ENCODE measurements at regions of chr18 and their contacts with region 1.

Region 1: DNA sequence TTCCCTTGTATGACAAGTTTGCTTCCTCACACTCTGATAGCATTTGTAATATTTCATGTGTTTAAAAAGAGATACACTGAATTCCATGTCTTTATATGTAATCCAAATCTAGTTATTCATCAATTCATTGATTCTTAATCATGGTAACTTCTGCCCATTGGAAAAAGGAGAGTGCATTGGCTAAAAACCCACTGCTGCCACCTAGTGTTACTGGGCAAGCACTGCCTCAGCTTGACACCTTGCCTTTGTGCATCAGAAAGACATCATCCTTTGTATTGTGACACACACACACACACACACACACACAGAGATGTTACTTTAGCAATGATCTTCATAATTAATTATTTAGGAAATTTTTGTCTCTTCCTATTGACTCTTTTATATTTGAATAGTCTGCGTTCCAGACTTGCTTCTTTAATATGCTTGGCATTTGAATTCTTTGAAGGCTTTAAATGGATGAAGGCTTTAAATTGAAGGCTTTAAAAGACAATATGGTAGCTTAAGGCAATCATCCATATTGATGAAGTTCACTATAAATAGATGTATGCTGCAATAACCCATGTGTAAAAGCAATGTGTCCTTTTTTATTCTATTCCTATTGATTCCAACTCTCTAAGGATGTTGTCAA is 414.2 kb upstream of the CHST9 start:
- DNase-seq: peak in 1 of 2 donors; percentile 9
- ATAC-seq: peak in 1 of 8 donors; percentile 37
- H3K4me3 ChIP-seq: no peak overlapping the region
- H3K27ac ChIP-seq: no peak overlapping the region
- H3K4me1 ChIP-seq: peaks cover 0 to 9% (median 0%) of the 10 kb centered on the region in 9 donors
- H3K27me3 ChIP-seq: no peaks in the 10 kb centered on the region
- CTCF ChIP-seq: peak; percentile 40 to 86 (median 82)

Region 2: GRCh38 chr18:26813043-26813442 is 786.3 kb before region 1 on chr18:
- intact Hi-C with region 1: loop called in 1 of 10 experiments (anchors 10 kb)
- DNase-seq: peak in 1 of 2 donors; percentile 27
- ATAC-seq: peak in 3 of 8 donors; percentile 73 to 79 (median 78)
- H3K4me3 ChIP-seq: no peak overlapping the region
- H3K27ac ChIP-seq: no peak overlapping the region
- H3K4me1 ChIP-seq: no peaks in the 10 kb centered on the region
- H3K27me3 ChIP-seq: peaks cover 0 to 6% (median 0%) of the 10 kb centered on the region in 7 donors
- CTCF ChIP-seq: peak; percentile 21 to 76 (median 62)

Region 3: GRCh38 chr18:27005589-27005988 is 593.7 kb before region 1 on chr18:
- intact Hi-C with region 1: loop called in 1 of 10 experiments (anchors 5 kb)
- DNase-seq: no peak
- ATAC-seq: no peak
- H3K4me3 ChIP-seq: no peak overlapping the region
- H3K27ac ChIP-seq: no peak overlapping the region
- H3K4me1 ChIP-seq: no peaks in the 10 kb centered on the region
- H3K27me3 ChIP-seq: peaks cover 0 to 4% (median 0%) of the 10 kb centered on the region in 7 donors
- CTCF ChIP-seq: peak; percentile 2 to 38 (median 20)

Region 4: GRCh38 chr18:27017901-27018500 is 581.3 kb before region 1 on chr18:
- intact Hi-C with region 1: loop called in 3 of 10 experiments (anchors 5 kb)
- DNase-seq: no peak
- ATAC-seq: peak in 2 of 8 donors; percentile 33 to 66
- H3K4me3 ChIP-seq: no peak overlapping the region
- H3K27ac ChIP-seq: no peak overlapping the region
- H3K4me1 ChIP-seq: no peaks in the 10 kb centered on the region
- H3K27me3 ChIP-seq: no peaks in the 10 kb centered on the region
- CTCF ChIP-seq: peak; percentile 13 to 70 (median 58)

Region 5: DNA sequence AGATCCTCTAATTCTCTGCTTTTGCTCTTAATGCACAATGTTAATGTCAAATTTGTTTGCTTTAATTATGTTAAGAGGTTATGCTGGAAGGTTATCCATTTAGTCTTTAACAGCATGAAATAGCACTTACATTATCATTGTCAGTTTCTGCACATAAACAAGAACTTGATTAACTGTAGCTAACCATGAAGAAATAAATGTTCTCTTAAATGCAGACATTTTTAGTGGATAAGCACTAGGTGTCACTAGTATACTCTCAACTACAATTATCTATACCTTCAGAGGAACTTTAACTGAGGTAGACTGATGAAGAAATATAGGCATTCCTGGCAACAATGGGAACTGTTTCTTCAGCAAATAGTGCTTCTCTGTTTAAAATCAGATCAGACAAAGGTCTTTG is 235.4 kb before region 1 on chr18:
- intact Hi-C with region 1: loop called in 9 of 10 experiments (anchors 2 to 10 kb)
- DNase-seq: no peak
- ATAC-seq: no peak
- H3K4me3 ChIP-seq: no peak overlapping the region
- H3K27ac ChIP-seq: no peak overlapping the region
- H3K4me1 ChIP-seq: no peaks in the 10 kb centered on the region
- H3K27me3 ChIP-seq: no peaks in the 10 kb centered on the region
- CTCF ChIP-seq: peak in 8 of 9 donors; percentile 4 to 50 (median 38)

Region 6: DNA sequence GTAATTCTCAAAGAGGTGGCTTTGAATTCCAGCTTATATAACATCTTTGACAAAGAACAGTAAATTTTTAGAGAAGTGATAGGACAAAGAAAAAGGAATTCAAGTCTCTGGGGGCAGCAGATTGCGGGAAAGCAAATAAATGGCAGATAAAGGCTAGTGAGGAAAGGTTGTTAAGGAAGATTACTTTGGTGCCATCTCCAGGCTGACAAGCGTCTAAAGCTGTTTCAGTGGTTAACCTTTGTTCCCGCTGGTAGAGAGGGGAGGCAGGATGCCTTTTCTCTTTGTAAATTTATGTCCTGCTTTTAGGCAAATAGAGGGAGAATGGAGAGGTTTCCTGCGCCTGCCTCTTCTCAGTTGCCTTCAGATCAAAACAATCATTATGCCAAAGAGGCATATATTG is 17.0 kb after region 1 on chr18:
- intact Hi-C with region 1: no loop called
- DNase-seq: no peak
- ATAC-seq: no peak
- H3K4me3 ChIP-seq: no peak overlapping the region
- H3K27ac ChIP-seq: no peak overlapping the region
- H3K4me1 ChIP-seq: peaks cover 0 to 7% (median 0%) of the 10 kb centered on the region in 9 donors
- H3K27me3 ChIP-seq: no peaks in the 10 kb centered on the region
- CTCF ChIP-seq: no peak